Activated CD8-positive, alpha-beta memory T cell treated with anti-CD3 and anti-CD28 coated beads, Interleukin-2, amount 10 ng/mL, durations not matched to agents 7 days and 5 days (primary cell): ENCODE measurements at regions of chr17 and their contacts with region 1.

Region 1: DNA sequence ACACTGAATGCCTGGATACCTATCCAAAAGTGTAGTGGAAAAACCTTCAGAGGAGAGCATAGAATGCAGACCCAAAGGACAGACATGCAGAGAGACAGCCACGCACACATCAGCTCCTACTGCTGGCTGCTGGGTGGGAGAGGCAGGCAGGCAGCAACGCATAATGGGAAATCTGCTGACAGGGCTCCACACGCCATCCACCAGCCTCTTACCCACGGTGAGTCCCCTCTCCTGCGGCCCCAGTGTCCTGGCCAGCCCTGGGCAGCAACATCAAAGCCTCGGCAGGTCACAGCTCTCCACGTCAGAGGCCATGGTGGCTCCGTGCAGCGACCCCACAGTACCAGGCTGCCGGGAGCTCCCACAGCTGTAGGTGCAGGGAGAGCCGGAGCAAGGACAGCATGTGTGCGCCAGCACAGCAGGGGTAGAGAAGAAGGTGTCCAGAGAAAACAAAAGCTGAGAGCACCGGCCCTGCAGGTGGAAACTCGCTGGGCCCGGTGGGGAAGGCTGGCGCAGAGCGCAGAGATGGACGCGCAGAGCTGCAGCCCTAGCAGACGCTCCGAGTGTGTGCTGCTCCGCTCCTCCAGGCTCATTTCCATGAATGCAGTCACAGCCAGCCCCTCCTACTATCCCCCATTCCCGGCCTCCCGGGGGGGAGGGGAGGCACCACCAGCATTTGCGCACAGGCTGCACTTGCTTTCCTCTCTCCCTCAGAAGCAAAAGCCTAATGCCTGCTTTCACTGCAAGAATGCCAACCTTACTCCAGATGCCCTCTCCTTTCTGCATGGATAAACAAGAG is 58.9 kb downstream of the CYTH1 start:
- DNase-seq: no peak
- ATAC-seq: no peak
- H3K4me3 Mint-ChIP-seq: no peak overlapping the region
- H3K27ac Mint-ChIP-seq: peak overlapping the region; percentile 55
- H3K4me1 Mint-ChIP-seq: peaks cover 86% of the 10 kb centered on the region
- H3K27me3 Mint-ChIP-seq: no peaks in the 10 kb centered on the region

Region 2: DNA sequence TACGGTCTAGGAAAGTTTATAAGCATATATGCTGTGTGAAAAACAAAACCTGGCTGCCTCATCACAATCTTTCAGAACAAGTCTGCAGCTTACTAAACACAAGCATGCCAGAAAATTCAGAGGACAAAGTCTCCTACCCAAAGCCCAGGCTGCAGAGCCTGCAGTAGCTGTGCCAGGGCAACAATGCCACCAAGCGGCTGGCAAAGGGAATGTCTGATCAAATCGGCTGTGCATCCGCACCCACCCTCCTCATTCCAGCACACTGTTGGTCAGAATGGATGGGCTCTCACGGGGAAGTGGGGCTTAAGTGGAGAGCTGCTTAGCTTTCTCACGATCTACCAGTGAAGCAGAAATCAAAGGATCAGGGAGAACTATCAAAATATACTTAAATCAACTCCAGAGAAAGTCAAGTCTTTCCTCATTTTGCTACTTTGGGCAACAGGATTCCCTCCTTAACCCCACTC is 14.7 kb before region 1 on chr17:
- CTCF ChIA-PET with region 1: interaction called, 18 read pairs
- DNase-seq: peak; percentile 70
- ATAC-seq: peak; percentile 77
- H3K4me3 Mint-ChIP-seq: no peak overlapping the region
- H3K27ac Mint-ChIP-seq: peak overlapping the region; percentile 75
- H3K4me1 Mint-ChIP-seq: peaks cover 53% of the 10 kb centered on the region
- H3K27me3 Mint-ChIP-seq: no peaks in the 10 kb centered on the region

Region 3: GRCh38 chr17:78736526-78737079 is 13.4 kb after region 1 on chr17:
- CTCF ChIA-PET with region 1: interaction called, 22 read pairs
- DNase-seq: peak; percentile 78
- ATAC-seq: peak; percentile 92
- H3K4me3 Mint-ChIP-seq: peak overlapping the region; percentile 83
- H3K27ac Mint-ChIP-seq: peak overlapping the region; percentile 89
- H3K4me1 Mint-ChIP-seq: peaks cover 79% of the 10 kb centered on the region
- H3K27me3 Mint-ChIP-seq: no peaks in the 10 kb centered on the region

Region 4: GRCh38 chr17:78745407-78746088 is 22.3 kb after region 1 on chr17:
- CTCF ChIA-PET with region 1: interaction called, 12 read pairs
- DNase-seq: peak; percentile 56
- ATAC-seq: no peak
- H3K4me3 Mint-ChIP-seq: no peak overlapping the region
- H3K27ac Mint-ChIP-seq: peak overlapping the region; percentile 51
- H3K4me1 Mint-ChIP-seq: peaks cover 89% of the 10 kb centered on the region
- H3K27me3 Mint-ChIP-seq: no peaks in the 10 kb centered on the region